ENCODE measurements at regions of chr19 and their contacts with region 1.

Region 1: DNA sequence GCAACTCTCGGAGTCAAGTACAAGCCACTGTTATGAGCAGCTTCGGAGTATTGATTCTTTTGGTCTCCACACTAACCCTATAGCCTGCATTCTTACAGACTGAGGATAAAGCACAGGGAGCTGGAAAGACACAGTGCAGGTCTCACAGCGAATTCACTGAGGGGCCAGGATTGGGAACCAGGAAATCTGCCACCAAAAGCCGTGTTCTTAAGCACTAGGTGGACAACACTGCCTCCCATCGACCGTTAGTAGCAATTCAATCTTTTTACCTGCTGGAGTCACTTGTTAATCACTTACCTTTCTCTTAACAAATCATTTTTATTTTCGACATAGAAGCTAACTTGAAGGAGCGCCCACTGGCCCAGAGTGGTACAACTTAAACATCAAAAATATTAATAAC is 6.3 kb downstream of the PMIS2 start:
- DNase-seq: peak; percentile 30
- H3K4me3 Mint-ChIP-seq: no peak overlapping the region
- H3K27ac Mint-ChIP-seq: no peak overlapping the region
- H3K4me1 Mint-ChIP-seq: peaks cover 5% of the 10 kb centered on the region
- H3K27me3 Mint-ChIP-seq: peaks cover 3% of the 10 kb centered on the region

Region 2: DNA sequence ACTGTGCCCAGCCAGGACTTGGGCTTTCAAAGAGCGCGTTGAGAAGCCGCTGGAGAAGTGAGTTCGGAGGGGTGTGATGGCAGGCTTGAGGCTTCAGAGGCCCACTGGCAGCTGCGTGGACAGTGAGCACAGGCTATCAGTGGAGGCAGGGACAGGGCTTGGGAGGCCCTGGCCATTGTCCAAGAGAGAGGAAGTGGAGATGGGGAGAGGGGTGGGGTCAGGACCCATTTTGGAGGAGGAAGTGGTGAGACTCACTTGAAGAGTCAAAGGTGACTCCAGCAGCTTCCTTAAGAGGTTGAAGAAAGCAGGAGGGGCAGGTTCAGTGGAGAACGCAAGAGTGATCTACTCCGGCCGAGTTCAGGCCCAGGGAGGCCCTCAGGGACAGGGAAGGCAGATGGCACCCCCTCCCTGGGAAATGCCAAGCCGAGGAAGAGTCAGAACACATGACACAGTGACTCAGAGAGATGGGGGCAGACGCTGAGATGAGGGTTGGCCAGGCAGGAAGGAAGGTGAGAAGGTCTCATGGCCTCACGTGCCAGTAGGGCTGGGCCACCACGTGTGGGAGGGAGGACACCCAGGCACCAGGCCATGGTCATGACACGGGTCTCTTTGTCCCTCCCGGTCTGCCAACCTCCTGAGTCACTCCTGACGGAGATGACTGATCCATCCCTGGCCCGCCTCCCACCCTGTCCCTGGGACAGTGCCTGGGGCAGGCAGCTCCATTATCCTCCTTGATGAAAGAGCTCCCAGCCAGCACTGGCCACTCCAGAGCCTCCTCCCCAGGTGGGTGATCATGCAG is 273.4 kb before region 1 on chr19:
- CTCF ChIA-PET with region 1: no interaction called
- POLR2A ChIA-PET with region 1: no interaction called
- intact Hi-C with region 1: no loop called
- DNase-seq: peak; percentile 51
- H3K4me3 Mint-ChIP-seq: no peak overlapping the region
- H3K27ac Mint-ChIP-seq: no peak overlapping the region
- H3K4me1 Mint-ChIP-seq: peaks cover 7% of the 10 kb centered on the region
- H3K27me3 Mint-ChIP-seq: no peaks in the 10 kb centered on the region

Region 3: DNA sequence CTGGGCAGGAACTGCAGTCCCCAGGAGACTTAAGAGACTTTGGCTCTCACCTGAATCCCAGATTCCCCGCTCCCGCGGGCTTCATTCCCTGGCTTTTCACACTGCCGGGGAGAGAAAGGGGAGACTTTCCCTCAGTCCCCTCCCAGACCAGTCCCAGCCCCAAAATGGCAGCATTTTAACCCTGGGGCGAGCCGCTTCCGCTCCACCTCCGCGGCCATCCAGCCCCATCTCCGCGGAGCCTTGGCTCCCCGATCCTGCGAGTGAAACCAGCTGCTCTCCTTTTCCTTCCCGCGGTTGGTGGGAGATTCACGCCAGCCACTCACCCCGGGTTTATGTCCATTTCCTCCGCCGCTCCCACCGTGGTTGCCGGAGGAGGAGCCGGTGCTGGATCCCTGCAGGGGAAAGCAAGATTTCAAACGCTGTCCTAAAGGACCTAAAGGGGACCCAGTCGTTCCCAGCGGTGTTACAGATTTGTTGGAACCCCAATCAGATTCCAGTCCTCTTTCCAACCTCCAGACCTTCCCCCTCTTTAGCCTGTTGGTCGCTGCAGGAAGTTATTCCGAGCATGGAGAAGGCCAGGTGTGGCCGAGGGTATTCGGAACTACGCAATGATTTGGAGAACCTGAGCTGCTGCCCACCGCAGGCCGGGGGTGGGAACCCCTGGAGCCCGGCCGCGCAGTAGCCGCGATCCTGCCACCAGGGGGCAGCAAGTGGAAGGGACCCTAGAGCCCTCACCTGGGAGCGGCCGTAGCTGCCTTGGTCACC is 82.2 kb before region 1 on chr19:
- CTCF ChIA-PET with region 1: interaction called, 59 read pairs
- POLR2A ChIA-PET with region 1: no interaction called
- intact Hi-C with region 1: loop called (anchors 1 kb)
- DNase-seq: peak; percentile 81
- H3K4me3 Mint-ChIP-seq: peak overlapping the region; percentile 62
- H3K27ac Mint-ChIP-seq: no peak overlapping the region
- H3K4me1 Mint-ChIP-seq: peaks cover 13% of the 10 kb centered on the region
- H3K27me3 Mint-ChIP-seq: peaks cover 29% of the 10 kb centered on the region